ENCODE measurements at regions of chr1 and their contacts with region 1.

Region 1: GRCh38 chr1:20194757-20195461 is 8.6 kb upstream of the PLA2G2C start:
- DNase-seq: peak; percentile 48 to 84 (median 75)
- ATAC-seq: peak; percentile 76 to 87 (median 82)
- H3K4me3 ChIP-seq: peak overlapping the region in 1 of 12 donors; percentile 7
- H3K27ac ChIP-seq: peak overlapping the region in 2 of 12 donors; percentile 39 to 69
- H3K4me1 ChIP-seq: peaks cover 0 to 15% (median 3%) of the 10 kb centered on the region in 12 donors
- H3K27me3 ChIP-seq: peaks cover 0 to 29% (median 0%) of the 10 kb centered on the region in 9 donors
- CTCF ChIP-seq: peak; percentile 66 to 85 (median 79)
- POLR2A ChIP-seq: no peak

Region 2: DNA sequence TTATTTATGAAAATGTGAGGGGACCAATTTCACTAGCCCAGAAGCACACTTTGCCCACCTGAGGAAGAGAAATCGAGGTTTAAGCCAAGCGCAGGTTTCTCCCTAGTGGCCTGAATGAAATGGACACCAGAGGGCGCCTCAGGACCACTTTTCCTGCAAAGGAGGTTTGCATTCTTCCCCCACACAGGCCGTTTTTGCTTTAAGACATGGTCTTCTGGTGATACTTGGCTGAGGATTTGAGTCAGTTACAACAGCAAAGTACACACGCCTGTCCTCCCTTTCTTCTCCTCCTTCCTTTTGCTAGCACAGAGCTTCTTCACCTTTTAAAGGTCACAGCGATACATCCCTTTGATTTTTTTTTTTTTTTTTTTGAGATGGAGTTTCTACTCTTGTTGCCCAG is 276.9 kb before region 1 on chr1:
- intact Hi-C with region 1: loop called in 8 of 10 experiments (anchors 1 to 10 kb)
- DNase-seq: peak; percentile 74 to 86 (median 79)
- ATAC-seq: peak; percentile 69 to 84 (median 71)
- H3K4me3 ChIP-seq: no peak overlapping the region
- H3K27ac ChIP-seq: no peak overlapping the region
- H3K4me1 ChIP-seq: peaks cover 0 to 11% (median 0%) of the 10 kb centered on the region in 12 donors
- H3K27me3 ChIP-seq: peaks cover 0 to 5% (median 0%) of the 10 kb centered on the region in 9 donors
- CTCF ChIP-seq: peak; percentile 83 to 94 (median 89)
- POLR2A ChIP-seq: no peak

Region 3: GRCh38 chr1:19974822-19975416 is 220.0 kb before region 1 on chr1:
- intact Hi-C with region 1: loop called in 6 of 10 experiments (anchors 2 to 5 kb)
- DNase-seq: peak in 4 of 5 donors; percentile 55 to 58 (median 56)
- ATAC-seq: peak; percentile 79 to 85 (median 84)
- H3K4me3 ChIP-seq: peak overlapping the region in 1 of 12 donors; percentile 26
- H3K27ac ChIP-seq: peak overlapping the region in 3 of 12 donors; percentile 1 to 24 (median 16)
- H3K4me1 ChIP-seq: peaks cover 0 to 18% (median 10%) of the 10 kb centered on the region in 12 donors
- H3K27me3 ChIP-seq: no peaks in the 10 kb centered on the region
- CTCF ChIP-seq: peak; percentile 58 to 87 (median 82)
- POLR2A ChIP-seq: no peak

Region 4: DNA sequence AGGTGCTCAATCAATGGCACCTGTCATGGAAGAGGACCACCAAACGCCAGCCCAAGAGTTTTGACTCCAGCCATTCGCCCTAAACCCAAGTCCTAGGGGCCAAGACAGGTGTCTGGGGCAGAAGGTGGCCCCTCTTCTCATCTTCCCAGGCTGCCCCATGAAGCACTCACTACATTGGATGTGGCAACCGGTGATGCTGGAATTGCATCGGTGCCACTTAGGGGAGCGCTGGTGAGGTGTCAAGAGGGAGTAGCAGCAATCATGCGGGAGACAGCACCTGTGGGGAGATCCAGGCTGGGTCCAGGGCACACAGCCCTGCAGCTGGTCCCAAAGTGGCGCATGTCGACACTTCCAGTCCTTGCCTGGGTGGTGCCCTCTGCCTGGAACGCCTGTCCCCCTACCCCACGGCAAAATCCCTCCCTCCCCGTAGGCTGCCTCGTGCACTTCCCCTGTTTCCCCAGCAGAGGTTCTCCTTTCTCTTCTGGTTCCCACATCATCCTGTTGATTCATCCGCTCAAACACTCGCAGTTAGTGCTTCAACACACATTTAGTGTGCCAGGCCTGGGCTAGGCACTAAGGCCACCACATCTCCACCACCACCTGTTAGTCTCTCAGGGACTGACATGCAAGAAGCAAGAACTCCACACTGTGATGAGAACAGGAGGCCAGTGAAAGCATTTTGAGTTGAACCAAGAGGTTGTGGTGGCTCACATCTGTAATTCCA is 94.1 kb before region 1 on chr1:
- intact Hi-C with region 1: loop called in 6 of 10 experiments (anchors 2 to 5 kb)
- DNase-seq: peak in 4 of 5 donors; percentile 30 to 43 (median 38)
- ATAC-seq: peak in 3 of 4 donors; percentile 82 to 87 (median 83)
- H3K4me3 ChIP-seq: no peak overlapping the region
- H3K27ac ChIP-seq: no peak overlapping the region
- H3K4me1 ChIP-seq: peaks cover 0 to 10% (median 0%) of the 10 kb centered on the region in 12 donors
- H3K27me3 ChIP-seq: peaks cover 0 to 5% (median 0%) of the 10 kb centered on the region in 9 donors
- CTCF ChIP-seq: peak; percentile 59 to 77 (median 70)
- POLR2A ChIP-seq: no peak

Region 5: GRCh38 chr1:20110679-20111078 is 84.2 kb before region 1 on chr1:
- intact Hi-C with region 1: loop called in 1 of 10 experiments (anchors 5 kb)
- DNase-seq: peak in 1 of 5 donors; percentile 29
- ATAC-seq: peak in 3 of 4 donors; percentile 19 to 70 (median 52)
- H3K4me3 ChIP-seq: no peak overlapping the region
- H3K27ac ChIP-seq: peak overlapping the region in 1 of 12 donors; percentile 63
- H3K4me1 ChIP-seq: peaks cover 0 to 9% (median 0%) of the 10 kb centered on the region in 12 donors
- H3K27me3 ChIP-seq: peaks cover 0 to 8% (median 0%) of the 10 kb centered on the region in 9 donors
- CTCF ChIP-seq: no peak
- POLR2A ChIP-seq: no peak

Region 6: GRCh38 chr1:20151906-20152598 is 42.9 kb before region 1 on chr1:
- intact Hi-C with region 1: loop called in 1 of 10 experiments (anchors 1 kb)
- DNase-seq: peak; percentile 81 to 92 (median 90)
- ATAC-seq: peak; percentile 85 to 95 (median 92)
- H3K4me3 ChIP-seq: peak overlapping the region; percentile 3 to 55 (median 43)
- H3K27ac ChIP-seq: peak overlapping the region in 5 of 12 donors; percentile 18 to 79 (median 40)
- H3K4me1 ChIP-seq: peaks cover 0 to 27% (median 10%) of the 10 kb centered on the region in 12 donors
- H3K27me3 ChIP-seq: peaks cover 0 to 7% (median 0%) of the 10 kb centered on the region in 9 donors
- CTCF ChIP-seq: peak; percentile 90 to 97 (median 94)
- POLR2A ChIP-seq: no peak

Measured in heart left ventricle (tissue), 16 donors.